Heart left ventricle (tissue), 16 donors: ENCODE measurements at regions of chr5 and their contacts with region 1.

Region 1: DNA sequence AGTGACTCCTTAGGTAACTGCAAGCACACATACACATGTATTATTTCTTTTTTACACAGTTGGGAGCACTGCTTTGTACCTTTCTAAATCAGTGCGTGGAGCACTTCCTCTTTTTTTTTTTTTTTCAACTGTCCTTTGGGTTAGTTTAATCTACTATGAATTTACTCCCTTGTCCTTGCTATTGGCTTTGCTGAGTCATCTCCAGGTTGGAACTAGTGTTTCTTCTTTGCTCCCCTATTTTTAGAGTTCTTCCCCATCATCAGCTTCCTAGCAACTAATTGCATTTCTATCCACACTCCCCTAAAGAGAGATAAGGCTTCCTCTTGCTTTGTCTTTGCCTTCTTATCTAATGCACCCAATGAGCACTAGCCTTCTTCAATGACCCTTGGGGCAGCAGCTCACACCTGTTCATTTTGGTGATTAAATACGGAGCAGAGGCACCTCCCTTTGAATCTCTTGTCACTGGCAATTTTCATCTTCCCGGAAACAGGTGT is 24.3 kb downstream of the S100Z start:
- DNase-seq: no peak
- ATAC-seq: no peak
- H3K4me3 ChIP-seq: no peak overlapping the region
- H3K27ac ChIP-seq: no peak overlapping the region
- H3K4me1 ChIP-seq: peaks cover 0 to 11% (median 0%) of the 10 kb centered on the region in 12 donors
- H3K27me3 ChIP-seq: no peaks in the 10 kb centered on the region
- CTCF ChIP-seq: no peak
- POLR2A ChIP-seq: no peak

Region 2: DNA sequence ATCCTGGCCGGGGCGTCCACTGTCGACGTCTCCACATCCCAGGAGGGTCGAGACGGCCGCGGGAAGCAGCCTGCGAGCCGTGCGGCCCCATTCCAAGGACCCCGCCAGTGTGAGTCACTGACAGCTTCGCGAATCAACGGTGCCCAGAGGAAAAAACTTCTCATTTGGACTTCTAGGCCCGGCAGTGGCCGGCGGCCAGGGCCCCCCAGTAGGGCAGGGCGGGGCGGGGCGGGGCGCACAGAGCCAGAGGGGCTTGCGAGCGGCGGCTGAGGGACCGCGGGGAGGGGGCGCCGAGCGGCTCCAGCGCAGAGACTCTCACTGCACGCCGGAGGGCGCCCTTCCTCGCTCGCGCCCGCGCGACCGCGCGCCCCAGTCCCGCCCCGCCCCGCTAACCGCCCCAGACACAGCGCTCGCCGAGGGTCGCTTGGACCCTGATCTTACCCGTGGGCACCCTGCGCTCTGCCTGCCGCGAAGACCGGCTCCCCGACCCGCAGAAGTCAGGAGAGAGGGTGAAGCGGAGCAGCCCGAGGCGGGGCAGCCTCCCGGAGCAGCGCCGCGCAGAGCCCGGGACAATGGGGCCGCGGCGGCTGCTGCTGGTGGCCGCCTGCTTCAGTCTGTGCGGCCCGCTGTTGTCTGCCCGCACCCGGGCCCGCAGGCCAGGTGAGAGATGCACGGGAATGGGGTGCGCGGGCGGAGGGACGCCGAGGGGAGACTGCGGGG is 158.2 kb before region 1 on chr5 and contains the start of gene F2R:
- intact Hi-C with region 1: no loop called
- DNase-seq: peak; percentile 65 to 82 (median 78)
- ATAC-seq: peak; percentile 40 to 89 (median 86)
- H3K4me3 ChIP-seq: peak within 1 kb of the TSS; percentile 66 to 95 (median 83)
- H3K27ac ChIP-seq: peak within 1 kb of the TSS; percentile 20 to 92 (median 76)
- H3K4me1 ChIP-seq: peaks cover 0 to 60% (median 19%) of the 10 kb centered on the region in 12 donors
- H3K27me3 ChIP-seq: peaks cover 0 to 25% (median 0%) of the 10 kb centered on the region in 9 donors
- CTCF ChIP-seq: peak; percentile 35 to 76 (median 58)
- POLR2A ChIP-seq: no peak
- total RNA-seq, gene F2R: 8.6 to 28.2 (median 13.6) TPM

Region 3: DNA sequence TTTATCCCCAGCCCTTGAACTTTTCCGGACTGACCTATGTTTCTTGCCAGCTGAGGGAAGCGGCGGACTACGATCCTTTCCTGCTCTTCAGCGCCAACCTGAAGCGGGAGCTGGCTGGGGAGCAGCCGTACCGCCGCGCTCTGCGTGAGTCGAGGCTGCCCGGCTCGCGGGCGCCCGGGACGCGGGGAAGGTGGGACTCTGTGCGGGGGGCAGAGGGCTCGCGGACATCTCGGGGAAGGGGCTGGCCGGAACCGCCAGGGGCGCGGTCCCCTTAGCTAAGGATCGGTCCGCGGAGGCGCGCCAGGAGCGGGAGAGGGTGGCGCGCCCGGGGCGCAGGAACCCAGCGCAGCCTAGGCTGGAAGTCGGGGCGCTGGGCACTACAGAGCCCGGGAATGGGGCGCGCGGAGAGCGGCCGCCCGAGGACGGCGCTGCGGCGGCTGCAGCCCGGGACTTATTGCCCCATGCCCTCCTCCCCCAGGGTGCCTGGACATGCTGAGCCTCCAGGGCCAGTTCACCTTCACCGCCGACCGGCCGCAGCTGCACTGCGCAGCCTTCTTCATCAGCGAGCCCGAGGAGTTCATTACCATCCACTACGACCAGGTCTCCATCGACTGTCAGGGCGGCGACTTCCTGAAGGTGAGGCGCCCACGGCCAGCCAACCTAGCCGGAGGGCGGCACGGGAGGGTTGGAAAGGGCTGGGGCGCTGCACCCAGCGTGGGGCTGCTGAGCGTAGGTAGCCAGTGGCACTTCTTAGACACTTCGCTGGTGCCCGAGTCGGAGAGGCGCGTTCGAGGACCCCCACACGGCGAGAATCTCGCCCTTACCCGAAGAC is 79.6 kb after region 1 on chr5:
- intact Hi-C with region 1: loop called in 1 of 10 experiments (anchors 5 kb)
- DNase-seq: peak in 3 of 5 donors; percentile 9 to 59 (median 30)
- ATAC-seq: peak in 3 of 4 donors; percentile 41 to 62 (median 51)
- H3K4me3 ChIP-seq: peak overlapping the region; percentile 24 to 65 (median 56)
- H3K27ac ChIP-seq: peak overlapping the region in 5 of 12 donors; percentile 2 to 74 (median 43)
- H3K4me1 ChIP-seq: peaks cover 0 to 25% (median 7%) of the 10 kb centered on the region in 12 donors
- H3K27me3 ChIP-seq: peaks cover 11 to 46% (median 18%) of the 10 kb centered on the region in 9 donors
- CTCF ChIP-seq: no peak
- POLR2A ChIP-seq: no peak

Region 4: GRCh38 chr5:77015938-77016569 is 141.9 kb after region 1 on chr5:
- intact Hi-C with region 1: loop called in 8 of 10 experiments (anchors 1 to 5 kb)
- DNase-seq: no peak
- ATAC-seq: peak in 2 of 4 donors; percentile 37 to 52
- H3K4me3 ChIP-seq: no peak overlapping the region
- H3K27ac ChIP-seq: no peak overlapping the region
- H3K4me1 ChIP-seq: peaks cover 0 to 8% (median 0%) of the 10 kb centered on the region in 12 donors
- H3K27me3 ChIP-seq: no peaks in the 10 kb centered on the region
- CTCF ChIP-seq: peak; percentile 21 to 60 (median 40)
- POLR2A ChIP-seq: no peak